Activated CD8-positive, alpha-beta T cell treated with anti-CD3 and anti-CD28 coated beads for 36 hours (primary cell): ENCODE measurements at regions of chr15 and their contacts with region 1.

Region 1: GRCh38 chr15:57503066-57503702 is 88.5 kb upstream of the MYZAP start:
- DNase-seq: peak; percentile 13
- ATAC-seq: peak; percentile 30
- H3K4me3 Mint-ChIP-seq: no peak overlapping the region
- H3K27ac Mint-ChIP-seq: no peak overlapping the region
- H3K4me1 Mint-ChIP-seq: no peaks in the 10 kb centered on the region
- H3K27me3 Mint-ChIP-seq: peaks cover 5% of the 10 kb centered on the region
- CTCF ChIP-seq: no peak

Region 2: DNA sequence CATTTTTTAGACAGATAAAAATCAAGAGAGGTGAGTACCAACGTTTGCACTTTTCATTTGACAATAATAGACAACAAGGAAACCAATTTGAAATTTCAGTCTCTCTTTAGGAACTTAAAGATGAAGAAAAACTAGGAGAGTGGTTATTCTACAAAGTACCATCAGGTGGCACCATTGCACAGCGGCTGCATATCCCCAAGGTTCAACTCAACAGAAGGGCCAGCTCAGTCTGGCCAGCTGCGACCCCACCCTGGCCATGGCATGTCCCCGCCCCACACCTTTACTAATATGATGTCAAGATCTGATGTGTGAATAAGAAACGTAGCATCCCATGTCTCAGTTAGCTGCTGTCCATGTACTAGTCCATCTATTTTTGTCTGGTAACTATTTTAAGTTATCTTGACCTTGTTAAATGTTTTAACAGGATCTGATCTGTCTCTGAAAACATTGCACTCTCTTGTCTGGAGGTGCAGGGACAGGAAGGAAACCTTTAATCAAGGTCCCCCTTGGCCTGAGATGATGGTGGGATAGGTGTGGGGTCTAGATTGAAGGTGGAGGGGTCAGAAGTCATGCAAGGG is 162.4 kb before region 1 on chr15:
- CTCF ChIA-PET with region 1: interaction called, 10 read pairs
- POLR2A ChIA-PET with region 1: no interaction called
- intact Hi-C with region 1: no loop called
- DNase-seq: peak; percentile 47
- ATAC-seq: peak; percentile 42
- H3K4me3 Mint-ChIP-seq: no peak overlapping the region
- H3K27ac Mint-ChIP-seq: no peak overlapping the region
- H3K4me1 Mint-ChIP-seq: no peaks in the 10 kb centered on the region
- H3K27me3 Mint-ChIP-seq: peaks cover 5% of the 10 kb centered on the region
- CTCF ChIP-seq: peak; percentile 86

Region 3: GRCh38 chr15:57440799-57441198 is 62.4 kb before region 1 on chr15:
- CTCF ChIA-PET with region 1: no interaction called
- POLR2A ChIA-PET with region 1: no interaction called
- intact Hi-C with region 1: no loop called
- DNase-seq: no peak
- ATAC-seq: no peak
- H3K4me3 Mint-ChIP-seq: no peak overlapping the region
- H3K27ac Mint-ChIP-seq: no peak overlapping the region
- H3K4me1 Mint-ChIP-seq: no peaks in the 10 kb centered on the region
- H3K27me3 Mint-ChIP-seq: peaks cover 3% of the 10 kb centered on the region
- CTCF ChIP-seq: no peak

Region 4: DNA sequence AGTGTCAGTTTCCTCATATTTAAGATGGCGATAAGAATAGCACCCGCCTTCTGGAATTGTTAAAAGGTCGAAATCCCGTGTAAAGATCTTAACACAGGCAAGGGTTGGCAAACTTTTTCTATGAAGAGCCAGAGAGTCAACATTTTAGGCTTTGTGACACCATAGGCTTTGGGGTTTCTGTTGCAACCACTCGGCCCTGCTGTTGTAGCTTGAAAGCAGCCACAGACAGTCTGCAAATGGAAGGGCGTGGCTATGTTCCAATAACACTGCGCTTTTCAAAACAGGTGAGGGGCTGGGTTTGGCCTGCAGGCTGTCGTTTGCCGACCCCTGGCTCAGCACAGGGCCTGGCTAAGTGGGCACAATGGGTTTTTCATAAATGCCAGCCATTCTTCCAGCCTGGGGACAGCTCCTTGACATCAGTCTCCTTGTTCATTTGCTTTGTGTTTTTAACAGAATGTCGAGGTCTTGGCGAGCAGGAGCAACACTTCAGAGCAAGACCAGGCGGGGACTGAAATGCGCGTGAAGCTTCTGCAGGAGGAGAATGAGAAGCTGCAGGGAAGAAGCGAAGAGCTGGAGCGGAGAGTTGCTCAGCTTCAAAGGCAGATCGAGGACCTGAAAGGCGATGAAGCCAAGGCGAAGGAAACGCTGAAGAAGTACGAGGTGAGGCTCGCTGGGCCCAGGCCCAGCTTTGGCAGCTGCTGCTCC is 13.3 kb after region 1 on chr15:
- CTCF ChIA-PET with region 1: no interaction called
- POLR2A ChIA-PET with region 1: no interaction called
- intact Hi-C with region 1: no loop called
- DNase-seq: no peak
- ATAC-seq: no peak
- H3K4me3 Mint-ChIP-seq: no peak overlapping the region
- H3K27ac Mint-ChIP-seq: no peak overlapping the region
- H3K4me1 Mint-ChIP-seq: no peaks in the 10 kb centered on the region
- H3K27me3 Mint-ChIP-seq: no peaks in the 10 kb centered on the region
- CTCF ChIP-seq: no peak